Heart left ventricle (tissue), 16 donors: ENCODE measurements at regions of chr17 and their contacts with region 1.

Region 1: GRCh38 chr17:1005361-1005946 is 8.5 kb downstream of the TIMM22 start:
- DNase-seq: peak in 4 of 5 donors; percentile 68 to 82 (median 74)
- ATAC-seq: peak; percentile 21 to 55 (median 36)
- H3K4me3 ChIP-seq: no peak overlapping the region
- H3K27ac ChIP-seq: peak overlapping the region; percentile 43 to 89 (median 78)
- H3K4me1 ChIP-seq: peaks cover 16 to 95% (median 79%) of the 10 kb centered on the region in 12 donors
- H3K27me3 ChIP-seq: no peaks in the 10 kb centered on the region
- CTCF ChIP-seq: no peak
- POLR2A ChIP-seq: no peak

Region 2: DNA sequence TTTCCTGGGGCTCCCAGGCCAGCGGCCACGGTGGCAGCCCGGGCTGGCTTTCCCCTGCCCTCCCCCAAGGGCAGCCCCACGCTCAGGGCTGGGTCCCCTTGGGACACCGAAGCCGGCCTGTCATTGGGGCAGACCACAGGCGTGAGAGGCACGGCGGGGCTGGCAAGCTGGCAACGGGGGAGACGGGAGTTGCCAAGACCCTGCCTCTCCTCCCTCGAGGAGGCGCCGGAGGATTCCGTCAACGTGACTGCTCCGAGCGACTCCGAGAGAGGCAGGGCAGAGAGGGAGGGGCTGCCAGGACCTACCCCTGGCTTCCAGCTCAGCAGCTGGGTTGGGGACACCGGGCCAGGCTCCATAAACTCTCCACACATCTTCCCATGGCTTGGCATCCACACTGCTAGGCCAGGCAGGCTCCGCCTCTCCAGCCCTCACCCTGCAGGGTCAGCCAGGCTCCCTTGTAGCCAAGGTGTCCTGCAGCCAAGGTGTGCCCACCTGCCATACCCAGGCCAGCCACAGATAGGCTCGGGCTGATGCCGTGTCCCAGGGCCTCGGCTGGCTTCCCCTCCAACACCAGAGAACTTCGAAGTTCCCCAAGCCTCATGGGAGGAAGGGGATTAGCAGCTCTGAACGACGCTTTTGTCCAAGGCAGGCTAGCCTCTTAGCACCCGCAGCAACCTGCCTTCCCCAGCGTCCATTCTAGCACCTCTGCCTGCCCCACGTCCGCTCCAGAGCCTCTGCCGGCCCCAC is 17.0 kb after region 1 on chr17:
- intact Hi-C with region 1: loop called in 2 of 10 experiments (anchors 2 kb)
- DNase-seq: peak; percentile 64 to 91 (median 84)
- ATAC-seq: peak; percentile 21 to 76 (median 66)
- H3K4me3 ChIP-seq: no peak overlapping the region
- H3K27ac ChIP-seq: peak overlapping the region; percentile 23 to 94 (median 72)
- H3K4me1 ChIP-seq: peaks cover 5 to 84% (median 56%) of the 10 kb centered on the region in 12 donors
- H3K27me3 ChIP-seq: no peaks in the 10 kb centered on the region
- CTCF ChIP-seq: no peak
- POLR2A ChIP-seq: no peak

Region 3: GRCh38 chr17:1039511-1040215 is 34.2 kb after region 1 on chr17:
- intact Hi-C with region 1: loop called in 3 of 10 experiments (anchors 5 kb)
- DNase-seq: peak; percentile 83 to 92 (median 90)
- ATAC-seq: peak; percentile 51 to 78 (median 72)
- H3K4me3 ChIP-seq: peak overlapping the region in 9 of 12 donors; percentile 20 to 41 (median 27)
- H3K27ac ChIP-seq: peak overlapping the region; percentile 78 to 96 (median 86)
- H3K4me1 ChIP-seq: peaks cover 7 to 79% (median 51%) of the 10 kb centered on the region in 12 donors
- H3K27me3 ChIP-seq: no peaks in the 10 kb centered on the region
- CTCF ChIP-seq: peak in 1 of 12 donors; percentile 8
- POLR2A ChIP-seq: peak in 1 of 2 donors; percentile 15

Region 4: DNA sequence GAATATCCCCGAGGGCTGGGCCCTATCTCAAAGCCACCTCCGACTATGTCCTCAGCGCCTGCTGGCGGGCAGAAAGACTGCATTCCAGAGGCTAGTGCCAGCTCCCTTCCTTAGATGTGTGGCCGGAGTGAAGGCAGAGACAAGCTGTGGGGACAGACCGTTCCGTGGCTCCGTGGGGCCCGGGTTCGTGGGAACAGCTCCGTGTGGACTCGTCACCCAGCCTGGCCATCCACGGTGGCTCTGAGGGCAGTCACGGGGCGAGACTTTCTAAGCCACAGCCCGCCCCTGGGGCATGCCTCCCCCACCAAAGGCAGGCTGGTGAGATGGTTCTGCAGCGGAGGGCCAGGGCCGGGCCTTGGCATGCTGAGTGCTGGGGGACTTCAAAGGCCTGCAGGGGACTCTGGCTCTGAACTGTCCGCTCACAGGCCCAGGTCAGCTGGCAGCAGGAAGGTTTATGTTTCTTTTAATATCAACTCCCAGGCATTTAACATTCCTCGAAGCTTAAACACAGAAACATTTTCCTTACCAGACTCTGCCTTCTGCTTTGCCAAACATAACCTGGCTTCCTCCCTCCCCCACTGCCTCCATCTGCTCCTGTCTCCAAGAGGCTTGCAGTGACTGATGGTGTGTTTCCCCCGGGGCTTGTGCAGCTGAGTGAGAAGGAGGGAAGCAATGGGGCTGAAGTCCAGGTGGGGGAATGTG is 41.9 kb after region 1 on chr17:
- intact Hi-C with region 1: loop called in 6 of 10 experiments (anchors 5 kb)
- DNase-seq: peak; percentile 61 to 89 (median 69)
- ATAC-seq: peak; percentile 68 to 80 (median 77)
- H3K4me3 ChIP-seq: no peak overlapping the region
- H3K27ac ChIP-seq: peak overlapping the region; percentile 52 to 95 (median 84)
- H3K4me1 ChIP-seq: peaks cover 11 to 74% (median 38%) of the 10 kb centered on the region in 12 donors
- H3K27me3 ChIP-seq: no peaks in the 10 kb centered on the region
- CTCF ChIP-seq: peak in 7 of 12 donors; percentile 9 to 37 (median 22)
- POLR2A ChIP-seq: no peak

Region 5: GRCh38 chr17:1078831-1079561 is 73.5 kb after region 1 on chr17:
- intact Hi-C with region 1: no loop called
- DNase-seq: peak; percentile 63 to 84 (median 80)
- ATAC-seq: peak; percentile 60 to 73 (median 68)
- H3K4me3 ChIP-seq: no peak overlapping the region
- H3K27ac ChIP-seq: peak overlapping the region in 10 of 12 donors; percentile 36 to 82 (median 70)
- H3K4me1 ChIP-seq: peaks cover 3 to 58% (median 19%) of the 10 kb centered on the region in 12 donors
- H3K27me3 ChIP-seq: no peaks in the 10 kb centered on the region
- CTCF ChIP-seq: no peak
- POLR2A ChIP-seq: no peak